ENCODE measurements at regions of chr7 and their contacts with region 1.

Region 1: GRCh38 chr7:73858807-73859206 is 2.2 kb upstream of the TMEM270 start:
- DNase-seq: no peak
- H3K4me3 ChIP-seq: no peak overlapping the region
- H3K4me3 Mint-ChIP-seq: no peak overlapping the region
- H3K27ac ChIP-seq: no peak overlapping the region
- H3K27ac Mint-ChIP-seq: no peak overlapping the region
- H3K4me1 ChIP-seq: peaks cover 8% of the 10 kb centered on the region
- H3K4me1 Mint-ChIP-seq: peaks cover 0 to 5% (median 1%) of the 10 kb centered on the region in 4 donors
- H3K27me3 ChIP-seq: no peaks in the 10 kb centered on the region
- H3K27me3 Mint-ChIP-seq: peaks cover 9 to 11% of the 10 kb centered on the region in 2 donors

Region 2: GRCh38 chr7:73635428-73636200 is 223.2 kb before region 1 on chr7:
- CTCF ChIA-PET with region 1: no interaction called
- POLR2A ChIA-PET with region 1: no interaction called
- intact Hi-C with region 1: no loop called
- DNase-seq: no peak
- H3K4me3 ChIP-seq: no peak overlapping the region
- H3K4me3 Mint-ChIP-seq: no peak overlapping the region
- H3K27ac ChIP-seq: no peak overlapping the region
- H3K27ac Mint-ChIP-seq: no peak overlapping the region
- H3K4me1 ChIP-seq: no peaks in the 10 kb centered on the region
- H3K4me1 Mint-ChIP-seq: no peaks in the 10 kb centered on the region
- H3K27me3 ChIP-seq: no peaks in the 10 kb centered on the region
- H3K27me3 Mint-ChIP-seq: peaks cover 28 to 29% of the 10 kb centered on the region in 2 donors

Region 3: GRCh38 chr7:73811760-73812168 is 47.0 kb before region 1 on chr7:
- CTCF ChIA-PET with region 1: interaction called, 72 read pairs
- POLR2A ChIA-PET with region 1: no interaction called
- intact Hi-C with region 1: loop called (anchors 1 kb)
- DNase-seq: peak in 4 of 5 donors; percentile 17 to 37 (median 27)
- H3K4me3 ChIP-seq: no peak overlapping the region
- H3K4me3 Mint-ChIP-seq: no peak overlapping the region
- H3K27ac ChIP-seq: no peak overlapping the region
- H3K27ac Mint-ChIP-seq: no peak overlapping the region
- H3K4me1 ChIP-seq: no peaks in the 10 kb centered on the region
- H3K4me1 Mint-ChIP-seq: no peaks in the 10 kb centered on the region
- H3K27me3 ChIP-seq: no peaks in the 10 kb centered on the region
- H3K27me3 Mint-ChIP-seq: peaks cover 9 to 11% of the 10 kb centered on the region in 2 donors

Region 4: GRCh38 chr7:73828107-73828803 is 30.6 kb before region 1 on chr7:
- CTCF ChIA-PET with region 1: interaction called, 51 read pairs
- POLR2A ChIA-PET with region 1: no interaction called
- intact Hi-C with region 1: loop called (anchors 2 kb)
- DNase-seq: peak in 1 of 5 donors; percentile 22
- H3K4me3 ChIP-seq: no peak overlapping the region
- H3K4me3 Mint-ChIP-seq: peak overlapping the region in 6 of 8 donors; percentile 1 to 65 (median 52)
- H3K27ac ChIP-seq: no peak overlapping the region
- H3K27ac Mint-ChIP-seq: peak overlapping the region in 3 of 7 donors; percentile 28 to 83 (median 45)
- H3K4me1 ChIP-seq: peaks cover 30% of the 10 kb centered on the region
- H3K4me1 Mint-ChIP-seq: peaks cover 22 to 56% (median 29%) of the 10 kb centered on the region in 4 donors
- H3K27me3 ChIP-seq: no peaks in the 10 kb centered on the region
- H3K27me3 Mint-ChIP-seq: peaks cover 2 to 8% of the 10 kb centered on the region in 2 donors

Region 5: DNA sequence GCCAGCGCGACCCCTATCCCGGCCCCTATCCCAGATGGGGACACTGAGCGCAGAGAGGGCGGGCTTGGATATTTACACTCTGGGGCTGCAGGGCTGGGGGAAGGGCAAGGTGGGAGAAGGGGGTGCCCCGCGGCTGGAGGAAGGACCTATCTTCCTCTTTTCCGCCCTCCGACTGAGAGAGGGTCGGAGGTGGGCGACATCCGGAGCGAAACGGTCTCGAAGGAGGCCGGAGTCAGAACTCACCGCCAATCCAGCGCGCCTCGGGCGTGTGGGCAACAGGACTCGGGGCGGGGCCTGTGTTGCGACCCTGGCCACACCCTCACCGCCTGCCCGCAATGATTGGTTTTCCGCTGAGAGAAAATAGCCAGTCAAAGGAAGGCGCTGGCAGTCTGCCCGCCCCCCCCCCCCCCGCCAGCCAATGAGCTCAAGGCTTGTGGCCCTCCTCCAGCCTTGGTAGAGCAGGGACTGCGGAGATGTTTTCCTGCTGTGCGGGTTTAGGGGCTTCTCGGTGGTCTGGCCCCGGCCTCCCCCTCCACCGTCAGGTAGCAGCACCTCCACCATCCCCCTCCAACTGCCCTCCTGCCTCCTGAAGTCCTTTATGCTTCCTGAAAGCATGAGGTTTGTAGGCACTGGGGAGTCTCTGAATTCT is 16.4 kb before region 1 on chr7 and contains the start of gene METTL27:
- CTCF ChIA-PET with region 1: interaction called, 35 read pairs
- POLR2A ChIA-PET with region 1: no interaction called
- intact Hi-C with region 1: no loop called
- DNase-seq: peak; percentile 84 to 91 (median 88)
- H3K4me3 ChIP-seq: peak within 1 kb of the TSS; percentile 47 to 72
- H3K4me3 Mint-ChIP-seq: peak within 1 kb of the TSS; percentile 86 to 91 (median 88)
- H3K27ac ChIP-seq: peak within 1 kb of the TSS; percentile 22
- H3K27ac Mint-ChIP-seq: peak within 1 kb of the TSS in 5 of 7 donors; percentile 57 to 86 (median 64)
- H3K4me1 ChIP-seq: peaks cover 6% of the 10 kb centered on the region
- H3K4me1 Mint-ChIP-seq: peaks cover 0 to 16% (median 8%) of the 10 kb centered on the region in 4 donors
- H3K27me3 ChIP-seq: no peaks in the 10 kb centered on the region
- H3K27me3 Mint-ChIP-seq: peaks cover 0 to 2% of the 10 kb centered on the region in 2 donors
- total RNA-seq, gene METTL27: 6.1 to 7.6 TPM

Region 6: DNA sequence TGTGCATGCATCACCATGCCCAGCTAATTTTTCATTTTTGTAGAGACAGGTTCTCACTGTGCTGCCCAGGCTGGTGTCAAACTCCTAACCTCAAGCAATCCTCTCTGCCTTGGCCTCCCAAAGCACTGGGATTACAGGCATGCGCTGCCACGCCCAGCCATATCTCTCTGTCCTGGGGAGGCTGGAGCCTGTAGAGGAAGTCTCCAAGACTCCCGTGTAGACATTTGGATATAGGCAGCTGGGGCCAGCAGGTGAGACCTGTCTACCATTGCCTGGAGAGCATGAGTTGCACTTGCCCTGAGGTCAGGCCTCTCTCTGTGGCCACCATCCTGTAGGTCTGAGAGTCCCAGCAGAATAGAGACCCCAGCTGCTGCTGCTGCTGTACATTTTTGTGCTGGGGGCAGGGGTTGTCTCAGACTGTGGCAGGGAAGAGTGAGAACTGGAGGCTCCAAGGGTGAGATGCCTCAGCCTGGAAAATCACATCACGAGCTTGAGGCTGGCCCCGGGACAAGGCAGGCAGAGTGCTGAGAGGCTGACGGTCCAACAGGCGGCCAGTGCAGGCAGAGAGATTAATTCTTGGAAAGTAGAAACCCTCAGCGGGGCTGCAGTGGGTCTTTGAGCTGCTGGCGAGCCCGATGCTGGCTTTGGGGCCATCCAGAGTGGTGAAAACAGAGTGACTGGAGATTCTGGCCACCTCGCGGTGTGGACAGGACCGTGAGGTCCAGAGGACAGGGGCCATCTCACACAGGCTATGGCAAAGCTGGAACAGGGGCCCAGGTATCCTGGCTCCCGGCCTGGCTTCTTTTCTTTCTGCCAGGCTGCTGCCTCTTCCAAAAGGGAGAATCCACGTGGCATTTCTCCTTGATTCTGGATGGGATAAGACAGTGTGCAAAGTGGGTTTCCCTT is 63.1 kb after region 1 on chr7:
- CTCF ChIA-PET with region 1: no interaction called
- POLR2A ChIA-PET with region 1: no interaction called
- intact Hi-C with region 1: no loop called
- DNase-seq: no peak
- H3K4me3 ChIP-seq: no peak overlapping the region
- H3K4me3 Mint-ChIP-seq: no peak overlapping the region
- H3K27ac ChIP-seq: no peak overlapping the region
- H3K27ac Mint-ChIP-seq: no peak overlapping the region
- H3K4me1 ChIP-seq: no peaks in the 10 kb centered on the region
- H3K4me1 Mint-ChIP-seq: no peaks in the 10 kb centered on the region
- H3K27me3 ChIP-seq: no peaks in the 10 kb centered on the region
- H3K27me3 Mint-ChIP-seq: peaks cover 4% of the 10 kb centered on the region in 2 donors